ENCODE measurements at regions of chr5 and their contacts with region 1.

Region 1: DNA sequence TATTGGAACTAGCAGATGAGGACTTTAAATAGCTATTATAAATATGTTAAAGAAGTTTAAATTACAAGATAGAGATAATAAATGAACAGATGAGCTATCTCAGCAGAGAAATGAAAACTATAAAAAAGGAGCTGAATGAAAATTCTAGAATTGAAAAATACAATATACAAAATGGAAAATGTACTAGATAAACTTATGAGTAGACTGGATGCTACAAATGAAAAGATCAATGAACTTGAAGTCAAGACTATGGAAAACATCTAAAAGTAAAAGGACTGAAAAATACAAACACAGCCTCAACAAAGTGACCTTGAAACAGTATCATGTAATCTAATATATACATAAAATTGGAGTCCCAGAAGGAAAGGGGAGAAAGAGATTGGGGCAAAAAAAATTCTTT is 10.7 kb upstream of the PDLIM4 start:
- DNase-seq: no peak
- H3K4me3 Mint-ChIP-seq: no peak overlapping the region
- H3K27ac Mint-ChIP-seq: no peak overlapping the region
- H3K4me1 Mint-ChIP-seq: no peaks in the 10 kb centered on the region
- H3K27me3 Mint-ChIP-seq: peaks cover 28% of the 10 kb centered on the region

Region 2: DNA sequence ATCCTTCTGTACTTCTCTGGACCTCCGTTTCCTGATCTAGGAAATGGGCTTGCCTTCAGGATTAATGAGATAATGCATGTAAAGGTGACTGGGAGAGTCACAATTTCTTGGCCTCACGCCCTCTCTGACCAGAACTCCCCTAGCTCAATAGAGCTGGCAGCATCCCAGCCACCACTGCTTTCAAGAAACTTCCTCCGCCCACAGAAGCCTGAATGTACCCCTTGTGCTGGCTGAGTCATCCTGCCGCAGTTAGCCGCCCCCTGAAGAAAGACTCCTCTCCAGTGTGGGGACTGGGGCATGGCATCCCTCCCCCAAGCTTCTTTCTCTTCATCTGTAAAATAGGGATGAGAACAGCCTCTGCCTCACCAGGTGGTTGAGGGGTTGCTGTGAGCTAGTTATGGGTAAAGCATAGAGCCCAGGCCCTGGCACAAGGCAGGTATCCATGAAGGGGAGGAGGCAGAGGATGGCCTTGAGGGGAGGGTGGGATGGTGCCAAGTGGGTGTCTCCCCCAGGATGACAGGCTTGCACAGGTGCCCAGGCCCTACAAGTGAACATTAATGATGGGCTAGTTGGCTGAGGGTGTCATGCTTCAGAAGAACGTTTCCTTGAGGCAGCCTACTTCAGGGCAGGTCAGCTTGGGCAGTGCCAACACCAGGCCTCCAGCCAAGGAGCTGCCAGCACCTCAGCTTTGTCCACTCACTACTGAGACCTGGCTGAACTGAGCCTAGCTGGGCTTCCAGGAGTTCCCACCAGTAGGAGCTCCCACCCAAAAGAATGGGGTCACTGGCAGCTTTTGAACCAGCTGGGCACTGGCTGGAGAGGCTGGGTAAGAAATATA is 14.1 kb after region 1 on chr5:
- intact Hi-C with region 1: loop called (anchors 2 kb)
- DNase-seq: no peak
- H3K4me3 Mint-ChIP-seq: peak overlapping the region; percentile 41
- H3K27ac Mint-ChIP-seq: peak overlapping the region; percentile 69
- H3K4me1 Mint-ChIP-seq: peaks cover 41% of the 10 kb centered on the region
- H3K27me3 Mint-ChIP-seq: peaks cover 17% of the 10 kb centered on the region

Region 3: DNA sequence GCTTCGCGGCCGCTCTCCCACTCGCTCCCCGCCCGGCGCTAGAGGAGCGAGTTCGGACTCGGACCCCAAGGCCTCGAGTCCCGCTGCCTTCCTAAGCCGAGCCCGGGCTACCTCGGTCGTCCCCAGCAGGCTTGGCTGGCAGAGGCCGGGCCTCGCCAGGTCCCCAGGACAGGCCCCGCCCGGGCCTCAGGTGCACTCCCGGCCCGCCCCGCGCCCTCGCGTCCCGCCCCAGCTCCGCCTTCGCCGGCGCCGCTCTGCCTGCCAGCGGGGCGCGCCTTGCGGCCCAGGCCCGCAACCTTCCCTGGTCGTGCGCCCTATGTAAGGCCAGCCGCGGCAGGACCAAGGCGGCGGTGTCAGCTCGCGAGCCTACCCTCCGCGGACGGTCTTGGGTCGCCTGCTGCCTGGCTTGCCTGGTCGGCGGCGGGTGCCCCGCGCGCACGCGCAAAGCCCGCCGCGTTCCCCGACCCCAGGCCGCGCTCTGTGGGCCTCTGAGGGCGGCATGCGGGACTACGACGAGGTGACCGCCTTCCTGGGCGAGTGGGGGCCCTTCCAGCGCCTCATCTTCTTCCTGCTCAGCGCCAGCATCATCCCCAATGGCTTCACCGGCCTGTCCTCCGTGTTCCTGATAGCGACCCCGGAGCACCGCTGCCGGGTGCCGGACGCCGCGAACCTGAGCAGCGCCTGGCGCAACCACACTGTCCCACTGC is 122.8 kb after region 1 on chr5 and contains the start of gene SLC22A5:
- intact Hi-C with region 1: no loop called
- DNase-seq: peak; percentile 66
- H3K4me3 Mint-ChIP-seq: peak within 1 kb of the TSS; percentile 81
- H3K27ac Mint-ChIP-seq: peak within 1 kb of the TSS; percentile 70
- H3K4me1 Mint-ChIP-seq: peaks cover 33% of the 10 kb centered on the region
- H3K27me3 Mint-ChIP-seq: no peaks in the 10 kb centered on the region
- total RNA-seq, gene SLC22A5: 4.3 and 6.2 TPM in 2 replicates

Region 4: DNA sequence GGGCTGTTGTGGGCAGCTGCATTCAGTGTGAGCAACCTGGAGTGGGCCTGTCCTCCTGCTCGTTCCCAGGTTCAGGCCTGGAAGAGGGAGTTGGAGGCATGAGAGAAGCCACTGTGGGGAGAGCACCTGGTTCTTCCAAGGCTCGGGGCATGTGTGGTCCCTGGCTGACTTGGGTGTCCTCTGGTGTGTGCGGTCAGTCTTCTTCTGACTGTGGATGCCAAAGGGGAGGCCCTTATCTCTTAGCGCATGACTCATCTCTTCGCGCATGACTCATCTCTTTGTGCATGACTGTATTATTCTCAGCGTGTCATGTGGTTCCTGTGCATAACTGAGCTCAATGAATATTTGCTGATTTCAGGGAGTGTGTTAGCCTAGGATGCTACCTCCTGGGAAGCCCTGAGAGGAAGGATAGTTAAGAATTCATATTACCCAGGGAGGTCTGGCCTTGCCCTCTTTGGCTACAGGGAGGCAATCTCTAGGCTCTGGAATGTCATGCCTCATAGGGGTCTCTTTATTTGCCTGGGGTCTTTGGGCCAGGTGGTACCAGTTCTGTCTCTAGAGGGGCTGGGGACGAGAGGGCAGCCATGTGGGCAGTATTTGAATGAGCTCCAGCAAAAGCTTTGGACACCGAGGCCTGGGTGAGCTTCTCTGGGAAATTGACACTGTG is 993.8 kb after region 1 on chr5:
- intact Hi-C with region 1: no loop called
- DNase-seq: peak; percentile 4
- H3K4me3 Mint-ChIP-seq: no peak overlapping the region
- H3K27ac Mint-ChIP-seq: no peak overlapping the region
- H3K4me1 Mint-ChIP-seq: peaks cover 21% of the 10 kb centered on the region
- H3K27me3 Mint-ChIP-seq: peaks cover 3% of the 10 kb centered on the region